ENCODE measurements at regions of chr14 and their contacts with region 1.

Region 1: GRCh38 chr14:94136575-94137331 is 7.3 kb upstream of the IFI27L2 start:
- DNase-seq: peak; percentile 91
- ATAC-seq: peak; percentile 87
- H3K4me3 Mint-ChIP-seq: no peak overlapping the region
- H3K27ac Mint-ChIP-seq: no peak overlapping the region
- H3K4me1 Mint-ChIP-seq: peaks cover 5% of the 10 kb centered on the region
- H3K27me3 Mint-ChIP-seq: peaks cover 29% of the 10 kb centered on the region

Region 2: DNA sequence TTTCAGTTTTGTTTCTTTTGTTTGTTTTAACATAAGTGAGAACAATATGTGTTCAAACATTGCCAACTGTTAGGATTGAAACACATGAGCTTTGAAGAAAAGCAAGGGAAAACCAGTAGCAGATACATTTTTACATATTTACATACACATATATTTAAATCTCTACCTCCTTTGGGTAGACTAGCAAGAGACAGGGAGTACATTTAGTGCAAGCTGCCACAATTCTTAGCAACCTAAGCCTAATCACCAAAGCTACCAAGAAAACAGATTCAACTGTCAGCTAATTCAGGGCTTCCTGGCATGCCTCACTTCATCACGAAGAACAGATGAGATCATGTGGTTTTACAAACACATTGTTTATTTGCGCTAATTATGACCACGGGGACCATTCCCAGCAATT is 491.6 kb before region 1 on chr14:
- CTCF ChIA-PET with region 1: no interaction called
- DNase-seq: no peak
- ATAC-seq: no peak
- H3K4me3 Mint-ChIP-seq: no peak overlapping the region
- H3K27ac Mint-ChIP-seq: no peak overlapping the region
- H3K4me1 Mint-ChIP-seq: no peaks in the 10 kb centered on the region
- H3K27me3 Mint-ChIP-seq: peaks cover 30% of the 10 kb centered on the region

Region 3: DNA sequence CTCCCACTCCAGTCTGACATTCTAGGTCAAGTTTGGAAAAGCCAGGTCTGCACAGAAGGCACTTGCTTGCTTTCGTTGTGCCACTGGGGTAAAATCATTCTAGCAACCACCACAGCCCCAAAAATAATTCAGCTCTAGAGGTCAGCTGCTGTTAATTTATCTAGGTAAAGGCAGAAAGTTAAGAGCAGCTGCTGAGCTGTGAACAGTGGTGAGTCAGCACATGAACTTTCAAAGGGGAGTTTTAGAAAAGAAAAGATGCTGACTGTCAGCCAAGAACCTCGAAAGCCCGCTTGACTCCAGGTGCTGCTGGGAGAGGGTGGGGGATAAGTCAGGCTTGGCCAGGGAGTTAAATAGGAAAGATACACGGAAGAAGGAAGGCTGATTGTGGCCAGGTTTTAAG is 127.0 kb before region 1 on chr14:
- CTCF ChIA-PET with region 1: interaction called, 11 read pairs
- DNase-seq: no peak
- ATAC-seq: no peak
- H3K4me3 Mint-ChIP-seq: no peak overlapping the region
- H3K27ac Mint-ChIP-seq: peak overlapping the region; percentile 79
- H3K4me1 Mint-ChIP-seq: peaks cover 57% of the 10 kb centered on the region
- H3K27me3 Mint-ChIP-seq: no peaks in the 10 kb centered on the region

Region 4: DNA sequence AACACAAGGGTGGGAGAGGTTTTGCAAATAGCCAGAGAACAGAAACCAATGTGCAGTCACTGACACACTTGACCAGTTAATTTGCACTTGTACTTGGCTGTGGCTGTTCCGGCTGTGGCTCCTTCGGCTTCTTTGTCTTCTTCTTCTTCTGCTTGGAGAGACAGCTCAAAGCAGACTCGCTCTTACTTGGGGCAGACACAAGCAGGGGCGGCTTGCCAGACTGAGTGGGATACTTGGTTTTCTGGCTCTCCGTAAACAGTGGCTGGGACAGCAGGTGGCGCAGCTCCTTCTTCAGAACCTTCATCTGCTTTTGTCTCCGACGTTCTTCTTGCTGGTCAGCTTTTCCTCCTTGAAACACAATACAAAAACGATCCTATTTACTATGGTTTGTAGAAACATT is 85.6 kb before region 1 on chr14:
- CTCF ChIA-PET with region 1: interaction called, 41 read pairs
- DNase-seq: peak; percentile 40
- ATAC-seq: no peak
- H3K4me3 Mint-ChIP-seq: no peak overlapping the region
- H3K27ac Mint-ChIP-seq: no peak overlapping the region
- H3K4me1 Mint-ChIP-seq: peaks cover 35% of the 10 kb centered on the region
- H3K27me3 Mint-ChIP-seq: no peaks in the 10 kb centered on the region

Region 5: DNA sequence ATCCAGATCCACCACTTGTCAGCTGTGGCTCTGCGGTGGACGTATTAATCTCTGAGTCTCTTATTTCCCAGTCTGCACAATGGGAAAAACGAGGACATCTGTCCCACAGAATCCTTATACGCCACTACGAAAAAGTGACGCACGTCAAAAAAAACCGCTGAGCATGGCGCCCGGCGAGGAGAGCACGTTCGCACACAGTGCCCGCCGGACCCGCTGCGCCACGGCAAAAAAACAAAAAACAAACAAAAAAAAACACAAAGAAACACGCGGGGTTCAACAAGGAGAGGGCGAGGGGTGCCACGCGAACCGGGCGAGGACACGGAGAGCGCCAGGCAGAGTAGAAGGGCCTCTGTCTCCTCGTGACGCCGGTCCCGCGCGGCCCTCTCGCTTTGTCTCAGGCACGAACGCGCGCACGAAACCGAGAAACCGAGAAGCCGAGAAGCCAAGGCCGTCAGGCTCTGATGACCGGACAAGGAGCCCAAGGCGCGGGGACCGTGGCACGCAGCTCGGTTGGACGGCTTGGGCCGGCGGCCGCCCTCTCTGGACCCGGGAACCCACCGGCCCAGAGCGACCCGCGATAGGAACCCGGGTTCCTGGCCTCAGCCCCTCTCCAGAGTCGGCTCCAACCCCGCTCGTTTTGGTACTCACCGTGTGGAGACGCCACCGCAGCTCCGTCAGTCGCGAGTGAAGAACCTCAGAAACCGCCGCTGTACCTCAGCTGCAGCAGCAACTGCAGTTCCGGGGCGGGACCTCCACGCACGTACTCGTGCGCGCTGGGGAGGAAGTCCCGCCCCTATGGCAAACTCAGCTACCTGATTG is 56.1 kb before region 1 on chr14 and contains the start of gene DDX24:
- CTCF ChIA-PET with region 1: interaction called, 18 read pairs
- DNase-seq: peak; percentile 98
- ATAC-seq: peak; percentile 97
- H3K4me3 Mint-ChIP-seq: peak within 1 kb of the TSS; percentile 95
- H3K27ac Mint-ChIP-seq: peak within 1 kb of the TSS; percentile 98
- H3K4me1 Mint-ChIP-seq: peaks cover 58% of the 10 kb centered on the region
- H3K27me3 Mint-ChIP-seq: no peaks in the 10 kb centered on the region
- total RNA-seq, gene DDX24: 211 to 244 TPM

Region 6: DNA sequence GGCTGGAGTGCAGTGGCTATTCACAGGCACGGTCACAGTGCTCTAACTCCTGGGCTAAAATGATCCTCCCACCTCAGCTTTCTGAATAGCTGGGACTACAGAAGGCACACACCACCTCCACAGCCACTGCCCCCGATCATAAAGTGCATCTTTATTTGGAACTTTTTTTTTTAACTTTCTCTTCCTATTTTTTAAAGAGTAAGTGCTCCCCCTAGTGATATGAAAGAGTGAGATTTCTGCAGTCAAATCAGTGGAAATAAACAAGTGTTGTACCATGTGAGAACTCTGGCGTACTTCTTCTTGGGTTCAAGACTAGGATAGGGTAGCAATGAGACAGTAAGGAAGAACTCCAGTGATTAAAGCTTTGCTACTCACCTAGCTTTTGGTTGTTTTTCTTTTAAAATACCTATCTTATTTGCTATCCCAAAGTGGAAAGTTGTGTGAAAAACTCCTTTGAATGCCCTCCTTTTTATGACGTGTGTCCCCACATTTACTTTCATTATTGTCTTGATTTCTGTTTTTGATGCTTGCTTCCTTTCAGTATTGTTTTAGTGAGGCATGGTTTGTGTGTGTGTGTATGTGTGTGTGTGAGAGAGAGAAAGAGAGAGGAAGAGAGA is 44.0 kb after region 1 on chr14:
- CTCF ChIA-PET with region 1: interaction called, 53 read pairs
- DNase-seq: no peak
- ATAC-seq: peak; percentile 91
- H3K4me3 Mint-ChIP-seq: peak overlapping the region; percentile 61
- H3K27ac Mint-ChIP-seq: peak overlapping the region; percentile 70
- H3K4me1 Mint-ChIP-seq: peaks cover 11% of the 10 kb centered on the region
- H3K27me3 Mint-ChIP-seq: peaks cover 31% of the 10 kb centered on the region

Measured in activated CD8-positive, alpha-beta memory T cell treated with anti-CD3 and anti-CD28 coated beads, Interleukin-2, amount 10 ng/mL, durations not matched to agents 7 days and 5 days (primary cell).